ENCODE measurements at regions of chr2 and their contacts with region 1.

Region 1: GRCh38 chr2:96320728-96321622 is 4.1 kb upstream of the ITPRIPL1 start:
- DNase-seq: peak; percentile 31 to 42
- ATAC-seq: peak; percentile 73 to 78
- H3K4me3 ChIP-seq: peak overlapping the region; percentile 78
- H3K27ac ChIP-seq: peak overlapping the region; percentile 80 to 84
- H3K4me1 ChIP-seq: peaks cover 9% of the 10 kb centered on the region; the same call in 2 of the 3 replicates
- CTCF ChIP-seq: no peak
- EP300 ChIP-seq: no peak
- POLR2A ChIP-seq: no peak
- RAD21 ChIP-seq: no peak

Region 2: GRCh38 chr2:96195410-96196066 is 125.4 kb before region 1 on chr2:
- CTCF ChIA-PET with region 1: no interaction called
- POLR2A ChIA-PET with region 1: no interaction called
- DNase-seq: no peak
- ATAC-seq: peak in 1 of 2 experiments; percentile 68; a peak in 3 of 6 replicates
- H3K4me3 ChIP-seq: no peak overlapping the region
- H3K27ac ChIP-seq: no peak overlapping the region
- H3K4me1 ChIP-seq: peaks cover 27% of the 10 kb centered on the region
- CTCF ChIP-seq: no peak
- EP300 ChIP-seq: no peak
- POLR2A ChIP-seq: no peak
- RAD21 ChIP-seq: no peak

Region 3: DNA sequence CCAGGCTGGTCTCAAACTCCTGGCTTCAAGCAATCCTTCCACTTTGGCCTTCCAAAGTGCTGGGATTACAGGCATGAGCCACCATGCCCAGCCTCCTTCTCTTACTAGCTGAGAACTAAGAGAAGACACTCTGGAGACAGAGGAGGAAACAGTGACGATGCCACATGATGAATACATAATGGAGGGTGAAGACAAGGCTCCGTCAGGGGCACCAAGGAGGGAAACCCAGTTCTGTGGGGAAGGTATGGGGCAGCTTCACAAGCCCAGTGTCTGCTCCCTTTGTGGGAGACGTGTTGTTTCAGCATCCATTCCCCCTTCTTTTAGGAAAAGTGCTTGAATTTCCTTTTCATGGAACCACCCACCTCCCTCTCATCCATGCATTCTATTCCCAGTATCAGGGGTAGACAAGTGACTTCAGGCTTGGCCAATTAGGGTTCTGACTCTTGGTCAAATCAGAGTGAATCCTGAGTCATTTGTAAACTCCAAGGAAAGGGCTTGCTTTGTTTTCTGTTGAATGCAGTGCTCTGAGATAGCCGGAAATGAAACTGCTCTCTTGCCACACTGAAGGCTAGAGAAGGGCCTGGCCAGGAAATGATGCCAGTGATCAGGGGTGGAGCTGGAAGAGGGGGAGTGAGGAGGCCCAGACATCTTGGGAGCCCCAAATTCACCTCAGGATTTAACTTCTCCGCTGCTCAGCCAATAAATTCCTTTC is 78.9 kb before region 1 on chr2:
- CTCF ChIA-PET with region 1: no interaction called
- POLR2A ChIA-PET with region 1: no interaction called
- DNase-seq: no peak
- ATAC-seq: no peak
- H3K4me3 ChIP-seq: no peak overlapping the region
- H3K27ac ChIP-seq: no peak overlapping the region
- H3K4me1 ChIP-seq: no peaks in the 10 kb centered on the region
- CTCF ChIP-seq: no peak
- EP300 ChIP-seq: no peak
- POLR2A ChIP-seq: no peak
- RAD21 ChIP-seq: no peak

Region 4: DNA sequence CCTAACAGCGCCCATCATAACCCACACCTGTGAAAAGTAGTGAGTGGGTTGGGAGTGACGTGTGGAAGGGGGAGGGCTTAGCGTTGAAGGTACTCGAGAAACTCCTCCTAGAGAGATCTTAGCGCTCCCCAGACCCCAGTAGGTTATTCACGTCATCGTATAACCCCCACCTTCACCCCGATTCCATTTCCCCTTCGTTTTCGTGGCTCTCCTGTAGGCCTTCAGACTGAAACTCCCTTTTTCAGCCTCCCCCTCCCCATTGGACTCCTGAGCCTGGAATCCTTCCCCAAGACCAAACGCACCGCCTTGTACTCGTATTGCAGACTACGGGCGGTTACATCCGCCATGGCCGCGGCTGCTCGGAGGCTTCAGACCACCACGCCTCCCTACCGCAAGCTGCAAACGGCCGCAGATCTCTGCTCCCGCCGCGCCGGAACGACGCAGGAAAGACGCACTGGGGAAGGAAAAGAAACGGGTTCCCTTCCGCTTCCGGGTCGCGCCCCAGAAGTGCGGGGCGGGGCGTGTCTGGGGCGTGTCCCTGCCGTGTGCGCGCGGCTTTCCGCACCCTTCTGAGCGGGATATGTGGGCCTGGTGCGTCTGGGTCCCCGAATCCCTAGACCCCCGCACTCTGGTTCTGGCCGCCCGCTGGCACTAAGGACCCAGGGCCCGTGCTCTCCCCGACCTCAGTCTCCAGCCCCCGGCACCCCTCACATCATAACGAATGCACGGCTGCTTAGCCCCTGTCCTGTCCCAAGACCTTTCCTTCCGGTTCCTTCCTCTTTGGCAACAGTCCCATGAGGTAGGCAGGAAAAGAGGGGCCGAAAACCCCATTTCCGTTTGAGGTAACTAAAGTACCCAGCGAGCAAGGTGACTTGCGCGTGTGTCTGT is 15.6 kb before region 1 on chr2 and contains the start of gene SNRNP200:
- CTCF ChIA-PET with region 1: interaction called, 4 read pairs
- POLR2A ChIA-PET with region 1: interaction called, 22 read pairs
- DNase-seq: peak; percentile 70 to 91
- ATAC-seq: peak; percentile 97 to 99
- H3K4me3 ChIP-seq: peak within 1 kb of the TSS; percentile 95
- H3K27ac ChIP-seq: peak within 1 kb of the TSS; percentile 93 to 98
- H3K4me1 ChIP-seq: peaks cover 16% of the 10 kb centered on the region
- CTCF ChIP-seq: no peak
- EP300 ChIP-seq: no peak
- POLR2A ChIP-seq: peak; percentile 74
- RAD21 ChIP-seq: peak in 1 of 2 experiments; percentile 18; a peak in 1 of 5 replicates
- polyA plus RNA-seq, gene SNRNP200: 202 and 315 TPM in 2 replicates

Region 5: GRCh38 chr2:96336104-96336775 is 15.3 kb after region 1 on chr2:
- CTCF ChIA-PET with region 1: interaction called, 10 read pairs
- POLR2A ChIA-PET with region 1: interaction called, 15 read pairs
- DNase-seq: no peak
- ATAC-seq: peak; percentile 16; a peak in 3 of 6 replicates
- H3K4me3 ChIP-seq: peak overlapping the region; percentile 65
- H3K27ac ChIP-seq: peak overlapping the region; percentile 92 to 94
- H3K4me1 ChIP-seq: peaks cover 26% of the 10 kb centered on the region
- CTCF ChIP-seq: no peak
- EP300 ChIP-seq: no peak
- POLR2A ChIP-seq: peak; percentile 56
- RAD21 ChIP-seq: no peak

Measured in A549 (cell line).